GM10248 (cell line): ENCODE measurements at regions of chr6 and their contacts with region 1.

Region 1: GRCh38 chr6:148166339-148166968 is 176.2 kb upstream of the SASH1 start:
- DNase-seq: peak; percentile 19
- CTCF ChIP-seq: peak; percentile 68

Region 2: GRCh38 chr6:147506704-147507114 is 659.7 kb before region 1 on chr6:
- CTCF ChIA-PET with region 1: interaction called, 10 read pairs
- POLR2A ChIA-PET with region 1: no interaction called
- DNase-seq: peak; percentile 68
- CTCF ChIP-seq: peak; percentile 68

Region 3: DNA sequence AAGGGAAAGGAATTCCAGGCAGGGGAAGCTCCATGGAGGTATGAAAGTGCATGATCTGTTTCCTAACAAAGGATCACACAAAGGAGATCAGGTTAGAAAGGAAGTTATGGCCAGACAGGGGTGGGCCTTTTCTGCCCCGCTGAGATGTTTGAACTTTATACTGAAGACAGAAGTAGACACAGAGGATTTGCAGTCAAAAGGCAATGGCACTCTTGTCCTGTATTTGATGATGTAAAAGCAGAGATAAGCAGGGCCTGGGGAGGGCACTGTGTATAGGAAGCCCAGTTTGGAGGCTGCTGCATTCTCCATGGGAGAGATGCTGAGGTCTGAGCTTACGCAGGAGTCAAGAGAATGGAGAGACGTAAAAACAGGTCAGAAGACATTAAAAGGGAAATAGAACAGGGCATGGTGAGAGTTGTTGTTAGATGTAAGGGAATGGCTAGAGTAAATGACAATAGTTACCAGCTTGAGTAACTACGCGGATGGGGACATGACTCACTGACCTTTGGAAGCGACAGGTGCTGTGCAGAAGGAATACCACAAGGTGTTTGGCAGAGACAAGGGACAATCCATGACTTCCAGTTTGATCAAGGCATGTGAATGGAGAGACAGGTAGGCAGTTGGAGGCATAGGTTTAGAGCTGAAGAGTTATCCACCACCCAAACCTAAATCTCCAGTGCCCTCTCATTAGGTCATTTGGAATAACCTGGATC is 14.4 kb before region 1 on chr6:
- CTCF ChIA-PET with region 1: interaction called, 18 read pairs
- POLR2A ChIA-PET with region 1: no interaction called
- DNase-seq: no peak
- CTCF ChIP-seq: no peak

Region 4: GRCh38 chr6:148192310-148192709 is 25.9 kb after region 1 on chr6:
- CTCF ChIA-PET with region 1: no interaction called
- POLR2A ChIA-PET with region 1: no interaction called
- DNase-seq: no peak
- CTCF ChIP-seq: no peak